Tibial artery (tissue), 4 donors: ENCODE measurements at regions of chr6 and their contacts with region 1.

Region 1: DNA sequence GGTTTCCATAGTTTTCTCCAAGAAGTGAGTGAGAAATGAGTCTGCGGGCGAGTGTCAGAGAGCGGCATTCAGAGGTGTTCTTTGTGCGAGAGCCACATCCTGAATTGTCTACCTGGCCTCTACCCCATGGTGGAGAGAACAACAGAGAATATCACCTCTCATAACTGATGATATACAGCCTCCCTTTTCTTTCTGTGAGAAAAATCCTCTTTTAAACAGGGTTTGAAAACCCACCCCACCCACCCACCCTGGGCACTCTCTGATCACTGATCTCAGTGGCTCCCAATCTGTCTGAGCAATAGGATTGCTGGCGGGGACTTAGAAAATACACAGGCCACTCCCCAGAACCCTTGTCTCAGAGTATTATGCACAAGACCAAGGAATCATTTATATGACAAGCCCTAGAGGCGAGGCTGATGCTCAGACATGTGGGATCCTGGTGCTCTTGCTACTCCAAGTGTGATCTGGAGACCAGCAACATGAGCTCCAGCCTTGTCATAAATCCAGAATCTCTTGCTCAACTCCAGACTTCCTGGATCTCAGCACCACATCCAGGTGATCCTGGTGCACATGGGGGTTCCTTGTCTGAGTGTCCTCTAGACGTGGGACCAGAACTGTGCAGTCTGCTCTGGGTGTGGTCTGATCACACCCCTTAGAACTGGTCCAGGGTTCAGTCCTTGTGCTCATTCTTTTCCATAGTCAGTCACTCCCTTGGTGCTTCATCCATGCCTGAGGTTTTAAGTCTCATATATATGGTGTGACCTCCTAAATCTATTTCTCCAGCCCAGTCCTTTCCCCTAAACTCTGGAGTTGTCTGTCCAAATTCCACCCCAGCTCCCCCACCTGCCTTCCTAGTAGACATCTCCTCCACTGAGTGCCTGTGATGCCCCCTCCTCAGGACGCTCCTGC is 5.3 kb downstream of the HLA-B start:
- DNase-seq: no peak
- H3K4me3 ChIP-seq: no peak overlapping the region
- H3K27ac ChIP-seq: no peak overlapping the region
- H3K4me1 ChIP-seq: peaks cover 0 to 11% (median 2%) of the 10 kb centered on the region in 4 donors
- H3K27me3 ChIP-seq: no peaks in the 10 kb centered on the region
- CTCF ChIP-seq: no peak

Region 2: GRCh38 chr6:31271641-31272357 is 79.9 kb before region 1 on chr6 and contains the start of gene HLA-C:
- intact Hi-C with region 1: loop called (anchors 5 kb)
- DNase-seq: peak; percentile 93 to 96
- H3K4me3 ChIP-seq: peak within 1 kb of the TSS; percentile 86 to 94
- H3K27ac ChIP-seq: peak within 1 kb of the TSS; percentile 91 to 100
- H3K4me1 ChIP-seq: peaks cover 0 to 19% (median 0%) of the 10 kb centered on the region in 4 donors
- H3K27me3 ChIP-seq: no peaks in the 10 kb centered on the region
- CTCF ChIP-seq: no peak